ENCODE measurements at regions of chr6 and their contacts with region 1.

Region 1: GRCh38 chr6:710601-711571 is 17.9 kb upstream of the EXOC2 start:
- DNase-seq: peak; percentile 69
- H3K4me3 Mint-ChIP-seq: peak overlapping the region; percentile 94
- H3K27ac Mint-ChIP-seq: peak overlapping the region; percentile 96
- H3K4me1 Mint-ChIP-seq: peaks cover 26% of the 10 kb centered on the region
- H3K27me3 Mint-ChIP-seq: peaks cover 7% of the 10 kb centered on the region

Region 2: DNA sequence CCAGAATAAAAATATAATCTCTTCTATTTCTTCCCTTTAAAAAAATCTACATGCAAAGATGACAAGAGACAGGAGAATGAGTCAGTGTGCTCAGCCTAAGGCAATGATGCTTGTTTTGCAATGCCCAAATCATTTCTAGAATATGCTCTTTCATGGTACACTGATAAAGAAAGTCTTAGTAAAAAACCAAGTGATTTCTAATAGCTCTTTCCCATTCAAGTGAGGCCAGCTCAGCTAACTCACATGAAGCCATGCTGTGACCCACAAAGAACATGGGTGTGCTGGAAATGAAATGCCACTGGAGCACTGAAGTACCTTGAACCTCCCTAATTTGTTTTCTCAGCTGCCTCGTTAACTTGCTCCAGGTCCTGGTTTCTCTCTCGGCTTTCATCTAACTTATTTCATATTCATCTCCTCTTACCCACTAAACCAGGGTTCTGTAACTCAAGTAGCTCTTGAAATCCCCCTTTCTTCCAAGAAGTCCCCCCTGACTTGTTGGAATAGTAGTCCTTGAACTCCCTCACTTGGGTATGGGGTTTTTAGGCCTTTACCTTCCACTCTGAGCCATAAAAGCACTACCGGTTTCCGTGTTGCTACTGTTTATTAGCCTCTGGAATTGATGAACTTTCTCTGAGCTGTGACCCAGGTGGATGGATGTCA is 226.7 kb before region 1 on chr6:
- CTCF ChIA-PET with region 1: no interaction called
- POLR2A ChIA-PET with region 1: no interaction called
- intact Hi-C with region 1: no loop called
- DNase-seq: peak; percentile 75
- H3K4me3 Mint-ChIP-seq: peak overlapping the region; percentile 58
- H3K27ac Mint-ChIP-seq: peak overlapping the region; percentile 99
- H3K4me1 Mint-ChIP-seq: peaks cover 73% of the 10 kb centered on the region
- H3K27me3 Mint-ChIP-seq: no peaks in the 10 kb centered on the region

Region 3: GRCh38 chr6:683742-684440 is 27.0 kb before region 1 on chr6:
- CTCF ChIA-PET with region 1: no interaction called
- POLR2A ChIA-PET with region 1: interaction called, 3 read pairs
- intact Hi-C with region 1: loop called (anchors 1 kb)
- DNase-seq: no peak
- H3K4me3 Mint-ChIP-seq: no peak overlapping the region
- H3K27ac Mint-ChIP-seq: no peak overlapping the region
- H3K4me1 Mint-ChIP-seq: peaks cover 51% of the 10 kb centered on the region
- H3K27me3 Mint-ChIP-seq: no peaks in the 10 kb centered on the region

Region 4: DNA sequence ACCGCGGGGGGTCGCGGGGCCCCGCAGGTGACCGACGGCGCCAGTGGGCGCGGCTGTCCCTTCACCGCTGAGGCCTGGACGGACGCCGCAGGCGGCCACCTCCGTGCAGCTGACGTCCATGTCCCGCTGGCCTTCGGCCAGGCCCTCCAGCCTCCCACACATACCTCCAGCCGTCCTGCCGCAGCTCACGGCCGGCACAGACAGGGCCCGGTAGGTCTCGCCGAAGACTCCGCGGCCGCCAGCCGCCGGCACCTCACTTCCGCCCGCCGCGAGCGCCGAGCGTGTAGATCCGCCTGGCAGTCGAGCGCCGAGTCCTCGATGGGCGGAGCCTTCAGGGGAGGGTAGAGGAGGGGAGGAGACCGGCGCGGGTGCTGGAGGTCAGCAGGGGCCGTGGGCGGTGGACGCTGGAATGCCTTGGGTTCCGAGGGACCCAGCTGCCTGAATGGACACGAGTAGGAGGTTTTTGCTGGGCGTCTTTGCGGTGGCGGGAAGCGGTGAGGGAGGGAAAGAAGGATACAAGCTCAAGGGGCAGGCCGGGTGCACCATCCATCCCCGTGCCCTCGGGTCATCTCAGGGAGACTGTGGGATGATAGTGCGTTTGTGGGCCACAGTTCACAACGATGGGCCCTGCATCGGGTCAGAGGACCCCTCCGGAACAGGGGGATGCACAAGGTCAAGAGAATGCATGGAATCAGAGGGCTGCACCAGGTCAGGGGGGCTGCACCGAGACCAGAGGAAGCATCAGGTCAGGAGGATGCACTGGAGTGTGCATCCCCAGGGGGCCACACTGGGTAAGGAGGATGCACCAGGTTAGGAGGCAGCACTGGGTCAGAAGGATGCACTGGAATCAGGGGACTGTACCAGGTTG is 17.8 kb before region 1 on chr6 and contains the start of gene EXOC2:
- CTCF ChIA-PET with region 1: interaction called, 3 read pairs
- POLR2A ChIA-PET with region 1: interaction called, 13 read pairs
- intact Hi-C with region 1: loop called (anchors 2 kb)
- DNase-seq: peak; percentile 92
- H3K4me3 Mint-ChIP-seq: peak within 1 kb of the TSS; percentile 95
- H3K27ac Mint-ChIP-seq: peak within 1 kb of the TSS; percentile 85
- H3K4me1 Mint-ChIP-seq: peaks cover 33% of the 10 kb centered on the region
- H3K27me3 Mint-ChIP-seq: no peaks in the 10 kb centered on the region
- total RNA-seq, gene EXOC2: 40.5 to 42.3 TPM

Region 5: GRCh38 chr6:971981-972640 is 261.2 kb after region 1 on chr6:
- CTCF ChIA-PET with region 1: no interaction called
- POLR2A ChIA-PET with region 1: no interaction called
- intact Hi-C with region 1: no loop called
- DNase-seq: no peak
- H3K4me3 Mint-ChIP-seq: no peak overlapping the region
- H3K27ac Mint-ChIP-seq: no peak overlapping the region
- H3K4me1 Mint-ChIP-seq: no peaks in the 10 kb centered on the region
- H3K27me3 Mint-ChIP-seq: peaks cover 3% of the 10 kb centered on the region